ENCODE measurements at regions of chr12 and their contacts with region 1.

Region 1: DNA sequence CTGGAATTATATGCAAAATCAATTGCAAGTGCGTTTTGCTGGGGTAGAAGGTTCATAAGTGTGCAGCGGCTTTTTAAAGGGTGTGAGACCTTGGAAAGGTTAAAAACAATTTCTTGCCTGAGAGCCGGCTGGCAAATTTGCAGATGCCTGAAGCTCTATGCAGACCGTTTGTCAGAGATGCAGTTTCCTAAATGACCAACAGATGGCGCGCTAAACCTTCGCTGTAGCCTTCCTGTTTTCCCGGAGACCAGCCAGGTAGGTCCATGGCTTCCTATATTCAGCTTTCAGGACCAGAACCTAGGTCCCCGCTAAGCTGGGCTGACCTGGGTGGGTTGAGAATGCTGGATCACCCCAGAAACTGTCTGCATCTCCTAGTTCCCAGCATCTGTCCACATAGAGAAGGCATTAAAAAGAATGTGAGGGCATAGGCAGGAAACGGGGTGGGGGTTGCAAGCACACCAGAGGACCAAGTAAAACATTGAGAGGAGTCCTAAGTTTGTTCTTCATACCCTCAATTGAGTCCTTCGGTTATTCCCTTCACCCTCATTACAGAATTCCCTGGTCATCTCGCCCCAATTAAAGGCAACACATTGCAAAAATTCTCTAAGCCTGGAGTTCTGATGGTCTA is 5.7 kb upstream of the NOS1 start:
- DNase-seq: peak; percentile 71
- ATAC-seq: peak; percentile 83
- H3K4me3 ChIP-seq: no peak overlapping the region
- H3K27ac ChIP-seq: no peak overlapping the region
- H3K4me1 ChIP-seq: no peaks in the 10 kb centered on the region
- H3K27me3 ChIP-seq: peaks cover 6% of the 10 kb centered on the region; the same call in 1 of the 2 replicates
- CTCF ChIP-seq: peak; percentile 95

Region 2: GRCh38 chr12:117236456-117237001 is 130.6 kb before region 1 on chr12:
- CTCF ChIA-PET with region 1: no interaction called
- POLR2A ChIA-PET with region 1: no interaction called
- in situ Hi-C with region 1: no loop called
- intact Hi-C with region 1: loop called (anchors 5 kb)
- DNase-seq: peak; percentile 48
- ATAC-seq: peak; percentile 93
- H3K4me3 ChIP-seq: no peak overlapping the region
- H3K27ac ChIP-seq: no peak overlapping the region
- H3K4me1 ChIP-seq: no peaks in the 10 kb centered on the region
- H3K27me3 ChIP-seq: peaks cover 5% of the 10 kb centered on the region; the same call in 1 of the 2 replicates
- CTCF ChIP-seq: peak; percentile 91

Region 3: GRCh38 chr12:117587631-117588287 is 220.6 kb after region 1 on chr12:
- CTCF ChIA-PET with region 1: interaction called, 24 read pairs
- POLR2A ChIA-PET with region 1: no interaction called
- in situ Hi-C with region 1: no loop called
- intact Hi-C with region 1: loop called (anchors 1 kb)
- DNase-seq: peak; percentile 39
- ATAC-seq: peak; percentile 95
- H3K4me3 ChIP-seq: no peak overlapping the region
- H3K27ac ChIP-seq: no peak overlapping the region
- H3K4me1 ChIP-seq: no peaks in the 10 kb centered on the region; the same call in 1 of the 2 replicates
- H3K27me3 ChIP-seq: peaks cover 4% of the 10 kb centered on the region
- CTCF ChIP-seq: peak; percentile 94

Region 4: GRCh38 chr12:117671734-117672133 is 304.6 kb after region 1 on chr12:
- CTCF ChIA-PET with region 1: interaction called, 8 read pairs
- POLR2A ChIA-PET with region 1: no interaction called
- in situ Hi-C with region 1: no loop called
- intact Hi-C with region 1: loop called (anchors 5 kb)
- DNase-seq: no peak
- ATAC-seq: no peak; the same call in 1 of the 2 replicates
- H3K4me3 ChIP-seq: no peak overlapping the region
- H3K27ac ChIP-seq: no peak overlapping the region
- H3K4me1 ChIP-seq: no peaks in the 10 kb centered on the region
- H3K27me3 ChIP-seq: peaks cover 2% of the 10 kb centered on the region; the same call in 1 of the 2 replicates
- CTCF ChIP-seq: peak; percentile 84

Region 5: GRCh38 chr12:117836999-117837736 is 470.0 kb after region 1 on chr12:
- CTCF ChIA-PET with region 1: interaction called, 29 read pairs
- POLR2A ChIA-PET with region 1: no interaction called
- in situ Hi-C with region 1: no loop called
- intact Hi-C with region 1: loop called (anchors 2 kb)
- DNase-seq: no peak
- ATAC-seq: peak; percentile 84
- H3K4me3 ChIP-seq: no peak overlapping the region
- H3K27ac ChIP-seq: no peak overlapping the region
- H3K4me1 ChIP-seq: peaks cover 4% of the 10 kb centered on the region; the same call in 1 of the 2 replicates
- H3K27me3 ChIP-seq: peaks cover 15% of the 10 kb centered on the region
- CTCF ChIP-seq: peak; percentile 98

Region 6: DNA sequence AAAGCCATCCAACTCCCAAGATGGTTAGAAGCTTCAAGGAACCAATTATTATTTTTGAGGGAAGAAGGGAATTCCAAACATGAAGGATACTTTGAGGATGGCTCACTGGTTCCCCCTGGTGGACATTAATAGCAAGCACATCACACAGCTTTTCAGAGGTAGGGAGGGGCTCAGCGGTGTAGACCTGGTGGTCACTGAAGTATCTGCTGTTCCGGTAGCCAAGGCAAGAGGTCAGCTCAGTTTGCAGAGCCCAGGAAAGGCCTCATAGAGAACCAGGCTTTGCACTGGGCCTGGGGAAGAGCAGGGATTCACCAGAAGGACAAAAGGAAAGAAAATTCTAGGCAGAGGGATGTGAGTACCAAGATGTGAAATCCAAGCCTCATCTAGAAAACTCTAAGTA is 482.9 kb after region 1 on chr12:
- CTCF ChIA-PET with region 1: interaction called, 3 read pairs
- POLR2A ChIA-PET with region 1: no interaction called
- in situ Hi-C with region 1: no loop called
- intact Hi-C with region 1: loop called (anchors 5 kb)
- DNase-seq: no peak
- ATAC-seq: peak; percentile 69
- H3K4me3 ChIP-seq: no peak overlapping the region
- H3K27ac ChIP-seq: no peak overlapping the region
- H3K4me1 ChIP-seq: no peaks in the 10 kb centered on the region
- H3K27me3 ChIP-seq: peaks cover 4% of the 10 kb centered on the region; the same call in 1 of the 2 replicates
- CTCF ChIP-seq: peak; percentile 88

Region 7: GRCh38 chr12:117857632-117858612 is 490.8 kb after region 1 on chr12:
- CTCF ChIA-PET with region 1: interaction called, 11 read pairs
- POLR2A ChIA-PET with region 1: no interaction called
- in situ Hi-C with region 1: no loop called
- intact Hi-C with region 1: loop called (anchors 5 kb)
- DNase-seq: no peak
- ATAC-seq: peak; percentile 50; the same call in 1 of the 2 replicates
- H3K4me3 ChIP-seq: no peak overlapping the region
- H3K27ac ChIP-seq: no peak overlapping the region
- H3K4me1 ChIP-seq: no peaks in the 10 kb centered on the region
- H3K27me3 ChIP-seq: no peaks in the 10 kb centered on the region
- CTCF ChIP-seq: peak; percentile 83